ENCODE measurements at regions of chr12 and their contacts with region 1.

Region 1: GRCh38 chr12:3073438-3074250 is 3.5 kb upstream of the TSPAN9 start:
- DNase-seq: peak; percentile 79 to 96
- H3K4me3 ChIP-seq: no peak overlapping the region
- H3K27ac ChIP-seq: no peak overlapping the region
- H3K4me1 ChIP-seq: peaks cover 0 to 12% (median 3%) of the 10 kb centered on the region in 4 experiments; a peak in 3 of 7 replicates
- H3K27me3 ChIP-seq: peaks cover 0 to 18% (median 8%) of the 10 kb centered on the region in 4 experiments; a peak in 3 of 7 replicates
- CTCF ChIP-seq: peak; percentile 95 to 99 (median 99)
- EP300 ChIP-seq: no peak
- POLR2A ChIP-seq: no peak
- RAD21 ChIP-seq: peak; percentile 90 to 95

Region 2: GRCh38 chr12:3016191-3016590 is 57.5 kb before region 1 on chr12:
- CTCF ChIA-PET with region 1: no interaction called
- POLR2A ChIA-PET with region 1: no interaction called
- DNase-seq: no peak
- H3K4me3 ChIP-seq: no peak overlapping the region
- H3K27ac ChIP-seq: no peak overlapping the region
- H3K4me1 ChIP-seq: no peaks in the 10 kb centered on the region; a peak in 1 of 7 replicates
- H3K27me3 ChIP-seq: no peaks in the 10 kb centered on the region
- CTCF ChIP-seq: no peak
- EP300 ChIP-seq: no peak
- POLR2A ChIP-seq: no peak
- RAD21 ChIP-seq: no peak

Region 3: GRCh38 chr12:3060778-3061458 is 12.7 kb before region 1 on chr12:
- CTCF ChIA-PET with region 1: interaction called, 26 read pairs
- POLR2A ChIA-PET with region 1: interaction called, 3 read pairs
- DNase-seq: no peak
- H3K4me3 ChIP-seq: no peak overlapping the region
- H3K27ac ChIP-seq: no peak overlapping the region
- H3K4me1 ChIP-seq: peaks cover 0 to 13% (median 3%) of the 10 kb centered on the region in 4 experiments; a peak in 5 of 7 replicates
- H3K27me3 ChIP-seq: no peaks in the 10 kb centered on the region; a peak in 1 of 7 replicates
- CTCF ChIP-seq: no peak
- EP300 ChIP-seq: no peak
- POLR2A ChIP-seq: no peak
- RAD21 ChIP-seq: no peak

Region 4: DNA sequence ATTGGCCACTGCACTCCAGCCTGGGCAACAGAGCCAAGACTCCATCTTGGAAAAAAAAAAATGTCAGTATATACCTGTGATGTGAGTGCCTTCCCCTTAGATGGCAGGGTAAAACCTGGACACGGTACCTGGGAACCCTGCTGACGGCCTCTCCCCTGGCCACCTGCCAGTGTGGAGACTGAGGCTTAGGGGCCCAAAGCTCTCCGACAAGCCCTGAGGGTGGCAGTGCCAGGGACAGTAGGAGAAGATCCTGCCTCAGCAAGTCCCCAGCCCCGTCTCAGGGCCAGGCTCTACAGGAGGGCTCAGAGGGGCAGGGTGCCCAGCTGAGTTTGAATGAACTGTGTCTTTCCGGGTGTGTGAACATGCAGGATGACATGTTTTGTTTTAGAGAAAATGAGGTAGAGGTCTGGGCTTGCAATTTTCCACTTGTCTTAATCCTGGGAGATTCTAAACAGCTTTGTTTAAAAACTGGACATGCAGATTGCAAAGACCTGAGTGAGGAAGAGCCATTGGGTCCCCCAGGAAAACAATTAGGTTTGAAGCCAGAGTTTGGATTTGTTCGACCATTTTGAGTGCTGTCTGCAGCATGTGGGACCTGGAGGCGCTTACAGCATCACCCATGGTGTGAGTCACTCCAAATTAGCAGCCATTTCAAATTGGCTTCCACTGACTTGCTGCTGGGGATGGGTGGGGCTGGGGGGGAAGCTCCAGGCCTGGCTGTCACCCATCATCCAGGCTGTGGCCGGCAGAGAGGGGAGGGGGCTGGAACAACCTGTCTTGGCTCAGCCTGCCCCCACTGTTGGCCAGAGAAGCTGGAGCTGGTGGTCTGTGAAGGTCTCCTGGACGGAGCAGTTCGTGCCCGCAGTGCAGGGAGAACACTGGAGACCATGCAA is 14.4 kb after region 1 on chr12:
- CTCF ChIA-PET with region 1: interaction called, 17 read pairs
- POLR2A ChIA-PET with region 1: interaction called, 4 read pairs
- DNase-seq: no peak
- H3K4me3 ChIP-seq: no peak overlapping the region
- H3K27ac ChIP-seq: no peak overlapping the region
- H3K4me1 ChIP-seq: peaks cover 8 to 23% (median 17%) of the 10 kb centered on the region in 4 experiments
- H3K27me3 ChIP-seq: no peaks in the 10 kb centered on the region; a peak in 2 of 7 replicates
- CTCF ChIP-seq: no peak
- EP300 ChIP-seq: no peak
- POLR2A ChIP-seq: no peak
- RAD21 ChIP-seq: no peak

Region 5: GRCh38 chr12:3101309-3102024 is 27.8 kb after region 1 on chr12:
- CTCF ChIA-PET with region 1: interaction called, 28 read pairs
- POLR2A ChIA-PET with region 1: no interaction called
- DNase-seq: no peak
- H3K4me3 ChIP-seq: no peak overlapping the region
- H3K27ac ChIP-seq: no peak overlapping the region
- H3K4me1 ChIP-seq: peaks cover 0 to 9% (median 2%) of the 10 kb centered on the region in 4 experiments; a peak in 4 of 7 replicates
- H3K27me3 ChIP-seq: no peaks in the 10 kb centered on the region
- CTCF ChIP-seq: no peak
- EP300 ChIP-seq: no peak
- POLR2A ChIP-seq: no peak
- RAD21 ChIP-seq: no peak

Region 6: GRCh38 chr12:3122835-3123678 is 49.4 kb after region 1 on chr12:
- CTCF ChIA-PET with region 1: interaction called, 43 read pairs
- POLR2A ChIA-PET with region 1: no interaction called
- DNase-seq: no peak
- H3K4me3 ChIP-seq: no peak overlapping the region
- H3K27ac ChIP-seq: no peak overlapping the region
- H3K4me1 ChIP-seq: no peaks in the 10 kb centered on the region; a peak in 1 of 7 replicates
- H3K27me3 ChIP-seq: no peaks in the 10 kb centered on the region
- CTCF ChIP-seq: no peak
- EP300 ChIP-seq: no peak
- POLR2A ChIP-seq: no peak
- RAD21 ChIP-seq: no peak

Region 7: DNA sequence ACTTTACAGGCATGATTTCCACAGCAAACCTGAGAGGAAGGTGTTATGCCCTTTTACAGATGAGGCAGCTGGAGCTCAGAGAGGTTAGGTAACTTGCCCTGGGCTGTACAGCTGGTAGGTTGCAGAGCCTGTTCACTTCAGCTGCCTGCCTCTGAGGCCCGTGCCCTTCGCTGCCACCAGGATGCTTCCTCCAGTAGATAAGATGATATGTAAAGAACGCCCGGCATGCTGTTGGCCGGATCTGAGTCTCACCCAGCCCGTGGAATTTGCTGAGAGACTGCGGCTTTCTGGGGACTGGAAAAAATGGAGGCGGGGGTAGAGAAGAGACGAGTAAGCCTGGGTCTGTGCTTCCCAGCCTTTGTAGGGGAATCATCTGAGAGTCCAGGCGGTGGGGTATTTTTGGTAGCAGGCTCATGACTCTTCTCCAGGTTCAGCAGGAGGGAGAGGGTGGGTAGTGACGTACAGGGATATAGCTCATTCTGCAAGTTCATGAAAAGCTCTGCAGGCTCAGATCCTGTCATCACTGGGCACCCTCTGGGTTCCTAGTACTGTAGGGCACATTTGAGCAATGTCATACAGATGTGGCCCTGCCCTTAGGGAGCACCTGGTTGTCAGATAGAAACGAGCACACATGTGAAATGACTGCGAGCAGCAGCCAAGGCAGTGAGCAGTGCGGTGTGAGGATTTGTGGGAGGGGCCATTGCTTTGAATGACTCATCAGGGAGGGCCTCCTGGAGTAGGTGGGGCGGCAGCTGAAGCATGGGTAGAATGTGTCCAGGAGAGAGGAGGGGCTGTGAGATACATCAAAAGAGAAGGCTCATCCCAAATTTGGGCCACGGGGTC is 162.9 kb after region 1 on chr12:
- CTCF ChIA-PET with region 1: no interaction called
- POLR2A ChIA-PET with region 1: no interaction called
- DNase-seq: no peak
- H3K4me3 ChIP-seq: no peak overlapping the region
- H3K27ac ChIP-seq: no peak overlapping the region
- H3K4me1 ChIP-seq: peaks cover 3 to 12% (median 9%) of the 10 kb centered on the region in 4 experiments
- H3K27me3 ChIP-seq: no peaks in the 10 kb centered on the region
- CTCF ChIP-seq: no peak
- EP300 ChIP-seq: no peak
- POLR2A ChIP-seq: no peak
- RAD21 ChIP-seq: no peak